Astrocyte of the cerebellum (primary cell): ENCODE measurements at regions of chr1 and their contacts with region 1.

Region 1: GRCh38 chr1:109643385-109644230 is 12.3 kb upstream of the GSTM4 start:
- DNase-seq: no peak
- H3K4me3 ChIP-seq: no peak overlapping the region
- CTCF ChIP-seq: peak; percentile 87

Region 2: GRCh38 chr1:108643492-108644335 is 999.9 kb before region 1 on chr1:
- in situ Hi-C with region 1: no loop called
- DNase-seq: peak; percentile 72
- H3K4me3 ChIP-seq: no peak overlapping the region
- CTCF ChIP-seq: peak; percentile 55

Region 3: GRCh38 chr1:109532365-109533136 is 111.1 kb before region 1 on chr1:
- in situ Hi-C with region 1: loop called (anchors 10 kb)
- DNase-seq: peak; percentile 31
- H3K4me3 ChIP-seq: no peak overlapping the region
- CTCF ChIP-seq: peak; percentile 97

Region 4: GRCh38 chr1:109548321-109549267 is 95.0 kb before region 1 on chr1 and contains the start of gene GNAI3:
- in situ Hi-C with region 1: no loop called
- DNase-seq: peak; percentile 90
- H3K4me3 ChIP-seq: peak within 1 kb of the TSS; percentile 86
- CTCF ChIP-seq: no peak

Region 5: DNA sequence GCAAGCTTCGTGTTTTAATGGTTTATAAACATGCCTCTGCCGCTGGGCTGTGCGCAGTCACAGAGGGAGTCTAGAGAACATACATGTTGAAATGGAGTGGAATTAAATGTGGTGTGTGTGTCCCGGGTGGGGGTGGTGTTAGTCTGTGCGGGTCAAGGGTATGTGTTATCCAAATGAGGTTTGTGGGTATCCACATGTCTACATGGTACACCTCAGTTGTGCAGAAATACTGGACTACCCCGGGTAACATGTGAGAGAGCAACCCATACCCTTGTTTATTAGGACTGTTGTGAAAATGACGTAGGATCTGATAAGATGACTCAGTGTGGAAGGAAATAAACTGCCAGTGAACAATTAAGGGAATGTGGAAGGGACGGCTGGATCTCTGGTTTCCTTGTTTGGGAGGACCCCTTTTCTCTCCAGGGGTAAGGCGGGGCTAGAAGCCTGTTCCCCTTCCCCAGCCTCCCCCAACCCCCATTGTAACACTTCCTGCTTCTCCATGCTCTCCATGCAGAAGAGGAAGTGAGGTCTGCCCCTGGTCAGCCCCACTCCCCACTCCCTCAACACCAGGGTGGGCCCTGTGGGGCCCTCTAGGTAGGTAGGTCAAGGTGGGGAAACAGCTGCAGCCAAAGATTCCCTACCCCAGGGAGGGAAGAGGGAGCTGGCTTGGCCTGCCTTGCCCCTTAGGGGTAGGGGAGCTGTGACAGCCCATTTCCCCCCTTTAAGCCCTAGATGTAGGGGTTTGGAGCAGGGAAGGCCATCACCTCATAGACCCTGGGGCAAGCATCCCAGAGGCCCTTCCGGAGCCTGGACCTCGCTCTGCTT is 119.4 kb after region 1 on chr1:
- in situ Hi-C with region 1: loop called (anchors 10 kb)
- DNase-seq: no peak
- H3K4me3 ChIP-seq: no peak overlapping the region
- CTCF ChIP-seq: no peak

Region 6: DNA sequence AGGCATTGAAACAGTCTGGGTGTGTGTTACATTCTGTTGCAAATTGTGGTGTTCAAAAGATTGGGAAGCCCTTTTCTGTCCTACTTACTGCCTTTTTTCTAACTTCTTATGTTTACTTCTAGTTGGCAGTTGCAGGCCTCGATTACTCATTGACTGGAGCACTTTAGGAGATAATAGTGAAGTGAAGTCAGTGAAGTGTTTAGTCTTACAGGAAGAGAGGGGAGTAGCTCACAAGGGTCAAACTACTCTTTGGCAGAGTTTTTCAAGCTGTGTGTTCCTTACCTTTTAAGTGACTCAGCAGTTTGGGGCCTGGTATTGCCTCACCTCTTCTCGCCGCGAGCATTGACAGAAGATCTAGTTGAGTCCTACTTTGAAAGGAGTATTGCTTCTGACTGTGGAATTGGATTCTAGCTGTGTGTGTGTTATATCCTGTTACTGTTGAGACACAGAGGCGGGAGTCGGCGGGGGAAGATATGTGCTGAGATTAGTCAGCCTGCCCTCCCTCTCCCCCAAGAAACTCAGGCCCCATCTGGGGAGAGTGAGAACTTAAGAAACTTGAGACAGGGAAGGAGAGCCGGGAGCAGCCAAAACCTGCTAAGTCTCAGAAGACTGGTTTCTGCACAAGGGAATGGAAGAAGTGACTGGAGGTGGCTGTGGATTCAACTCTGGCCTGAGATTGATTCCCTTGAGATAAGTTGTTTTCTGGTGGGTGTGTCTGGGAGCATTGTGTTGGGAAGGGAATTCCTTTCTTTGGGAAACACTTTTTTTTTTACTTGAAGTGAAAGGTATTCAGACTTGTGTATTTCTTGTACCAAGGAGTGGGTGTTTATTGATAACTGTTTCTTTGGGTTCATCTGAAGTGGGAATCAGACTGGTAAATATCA is 360.4 kb after region 1 on chr1:
- in situ Hi-C with region 1: loop called (anchors 10 kb)
- DNase-seq: peak; percentile 92
- H3K4me3 ChIP-seq: peak overlapping the region; percentile 31
- CTCF ChIP-seq: no peak